ENCODE measurements at regions of chr2 and their contacts with region 1.

Region 1: DNA sequence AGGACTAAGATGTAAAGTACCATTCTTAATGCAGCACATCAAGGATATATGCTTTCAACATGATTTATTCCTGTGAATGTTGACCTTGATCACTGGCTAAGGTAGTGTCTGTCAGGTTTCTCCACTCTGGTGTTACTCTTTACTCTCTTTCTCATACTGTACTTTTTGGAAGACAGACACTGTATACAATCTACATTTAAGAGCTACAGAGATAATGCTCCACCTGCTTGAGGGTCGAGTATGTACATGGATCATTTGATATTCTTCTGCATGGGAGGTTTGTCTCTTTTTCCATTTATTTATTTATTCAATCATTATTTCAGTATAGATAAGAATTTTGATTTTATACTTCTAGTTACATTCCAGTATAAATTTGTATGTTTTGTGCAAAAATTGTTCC is 199.5 kb upstream of the RGPD4 start:
- DNase-seq: no peak
- H3K4me3 ChIP-seq: no peak overlapping the region
- H3K27ac ChIP-seq: no peak overlapping the region
- H3K4me1 ChIP-seq: no peaks in the 10 kb centered on the region
- H3K27me3 ChIP-seq: no peaks in the 10 kb centered on the region
- CTCF ChIP-seq: no peak
- POLR2A ChIP-seq: no peak

Region 2: GRCh38 chr2:107430596-107431266 is 196.4 kb before region 1 on chr2:
- intact Hi-C with region 1: no loop called
- DNase-seq: no peak
- H3K4me3 ChIP-seq: no peak overlapping the region
- H3K27ac ChIP-seq: no peak overlapping the region
- H3K4me1 ChIP-seq: no peaks in the 10 kb centered on the region
- H3K27me3 ChIP-seq: no peaks in the 10 kb centered on the region
- CTCF ChIP-seq: no peak
- POLR2A ChIP-seq: no peak

Region 3: GRCh38 chr2:109038992-109039391 is 1411.8 kb after region 1 on chr2:
- intact Hi-C with region 1: loop called (anchors 5 kb)
- DNase-seq: no peak
- H3K4me3 ChIP-seq: no peak overlapping the region
- H3K27ac ChIP-seq: no peak overlapping the region
- H3K4me1 ChIP-seq: no peaks in the 10 kb centered on the region
- H3K27me3 ChIP-seq: no peaks in the 10 kb centered on the region
- CTCF ChIP-seq: no peak
- POLR2A ChIP-seq: no peak